ENCODE measurements at regions of chr21 and their contacts with region 1.

Region 1: GRCh38 chr21:40120940-40121575 is 253.8 kb downstream of the PCP4 start:
- DNase-seq: no peak
- ATAC-seq: no peak
- H3K4me3 Mint-ChIP-seq: no peak overlapping the region
- H3K27ac Mint-ChIP-seq: no peak overlapping the region
- H3K4me1 Mint-ChIP-seq: no peaks in the 10 kb centered on the region
- H3K27me3 Mint-ChIP-seq: no peaks in the 10 kb centered on the region; the same call in 1 of the 2 replicates
- CTCF ChIP-seq: peak; percentile 79

Region 2: GRCh38 chr21:39788383-39788782 is 332.7 kb before region 1 on chr21:
- CTCF ChIA-PET with region 1: interaction called, 10 read pairs
- POLR2A ChIA-PET with region 1: no interaction called
- DNase-seq: peak; percentile 79
- ATAC-seq: peak; percentile 100
- H3K4me3 Mint-ChIP-seq: no peak overlapping the region
- H3K27ac Mint-ChIP-seq: 0 out of 2 replicates have a peak overlapping the region, but pooled peaks have one; percentile 7
- H3K4me1 Mint-ChIP-seq: no peaks in the 10 kb centered on the region
- H3K27me3 Mint-ChIP-seq: peaks cover 6% of the 10 kb centered on the region; the same call in 1 of the 2 replicates
- CTCF ChIP-seq: 0 out of 2 replicates have a peak, but pooled peaks have one; percentile 18

Region 3: GRCh38 chr21:39867198-39867650 is 253.8 kb before region 1 on chr21 and contains the start of gene PCP4:
- CTCF ChIA-PET with region 1: interaction called, 63 read pairs
- POLR2A ChIA-PET with region 1: no interaction called
- DNase-seq: peak; percentile 87
- ATAC-seq: peak; percentile 100
- H3K4me3 Mint-ChIP-seq: peak within 1 kb of the TSS; percentile 3; the same call in 1 of the 2 replicates
- H3K27ac Mint-ChIP-seq: no peak within 1 kb of the TSS
- H3K4me1 Mint-ChIP-seq: peaks cover 10% of the 10 kb centered on the region
- H3K27me3 Mint-ChIP-seq: no peaks in the 10 kb centered on the region
- CTCF ChIP-seq: peak; percentile 94
- total RNA-seq, gene PCP4: 1.4 to 2.1 TPM (median 1.6 TPM) in 3 replicates

Region 4: DNA sequence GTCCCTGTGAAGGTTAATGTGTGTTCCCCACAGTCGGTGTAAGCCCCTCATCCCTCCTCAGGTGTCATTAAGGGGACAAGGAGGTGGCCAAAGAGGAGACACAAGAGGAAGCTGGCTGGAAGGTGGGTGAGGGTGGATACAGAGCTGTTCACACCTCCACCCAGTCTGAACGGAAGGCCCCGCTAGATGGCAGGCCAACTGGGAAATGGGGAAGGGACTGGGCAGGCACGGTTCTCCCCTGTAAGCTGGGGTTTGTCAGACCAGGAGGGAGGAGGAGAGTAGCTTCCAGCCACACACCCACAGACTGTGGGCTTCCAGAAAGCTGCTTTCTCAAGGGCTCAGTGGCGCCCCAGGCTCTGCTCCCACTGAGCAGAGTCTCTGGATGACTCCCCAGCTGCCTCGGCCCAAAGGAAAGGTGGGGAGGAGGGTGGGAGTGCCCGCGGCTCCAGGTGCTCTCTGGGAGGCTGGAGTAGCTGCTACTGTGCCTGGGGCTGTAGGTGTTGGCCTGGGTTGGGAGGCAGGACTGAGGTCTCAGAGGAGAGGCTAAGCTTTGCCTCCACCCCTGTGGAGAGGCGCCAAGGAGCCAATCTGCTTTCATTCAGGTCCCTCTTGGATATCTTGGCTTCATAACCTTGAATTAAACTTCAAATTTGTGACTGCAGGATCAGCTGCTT is 212.7 kb before region 1 on chr21:
- CTCF ChIA-PET with region 1: interaction called, 14 read pairs
- POLR2A ChIA-PET with region 1: no interaction called
- DNase-seq: peak; percentile 36
- ATAC-seq: peak; percentile 85
- H3K4me3 Mint-ChIP-seq: no peak overlapping the region
- H3K27ac Mint-ChIP-seq: no peak overlapping the region
- H3K4me1 Mint-ChIP-seq: peaks cover 7% of the 10 kb centered on the region
- H3K27me3 Mint-ChIP-seq: no peaks in the 10 kb centered on the region
- CTCF ChIP-seq: no peak

Region 5: DNA sequence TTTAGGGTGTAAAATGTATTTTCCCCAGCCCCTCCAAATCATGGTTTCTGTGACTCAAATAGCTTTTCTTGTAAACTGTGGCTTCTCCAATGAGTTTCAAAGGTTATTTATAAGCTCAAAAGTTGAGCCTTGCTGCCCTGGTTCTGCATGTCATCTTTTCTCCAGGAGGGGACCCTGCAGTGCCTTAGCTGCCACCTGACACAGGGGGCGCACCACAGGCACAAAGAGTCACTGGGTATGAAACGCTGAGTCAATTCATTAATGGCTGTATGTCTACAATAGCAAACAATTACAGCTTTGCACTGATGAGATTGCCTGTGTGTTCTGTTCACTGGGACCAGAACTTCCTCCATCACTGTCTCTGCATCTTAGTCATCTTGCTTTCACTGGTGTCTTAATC is 153.0 kb before region 1 on chr21:
- CTCF ChIA-PET with region 1: interaction called, 12 read pairs
- POLR2A ChIA-PET with region 1: no interaction called
- DNase-seq: peak; percentile 36
- ATAC-seq: peak; percentile 61
- H3K4me3 Mint-ChIP-seq: no peak overlapping the region
- H3K27ac Mint-ChIP-seq: no peak overlapping the region
- H3K4me1 Mint-ChIP-seq: no peaks in the 10 kb centered on the region
- H3K27me3 Mint-ChIP-seq: peaks cover 3% of the 10 kb centered on the region; the same call in 1 of the 2 replicates
- CTCF ChIP-seq: no peak

Region 6: DNA sequence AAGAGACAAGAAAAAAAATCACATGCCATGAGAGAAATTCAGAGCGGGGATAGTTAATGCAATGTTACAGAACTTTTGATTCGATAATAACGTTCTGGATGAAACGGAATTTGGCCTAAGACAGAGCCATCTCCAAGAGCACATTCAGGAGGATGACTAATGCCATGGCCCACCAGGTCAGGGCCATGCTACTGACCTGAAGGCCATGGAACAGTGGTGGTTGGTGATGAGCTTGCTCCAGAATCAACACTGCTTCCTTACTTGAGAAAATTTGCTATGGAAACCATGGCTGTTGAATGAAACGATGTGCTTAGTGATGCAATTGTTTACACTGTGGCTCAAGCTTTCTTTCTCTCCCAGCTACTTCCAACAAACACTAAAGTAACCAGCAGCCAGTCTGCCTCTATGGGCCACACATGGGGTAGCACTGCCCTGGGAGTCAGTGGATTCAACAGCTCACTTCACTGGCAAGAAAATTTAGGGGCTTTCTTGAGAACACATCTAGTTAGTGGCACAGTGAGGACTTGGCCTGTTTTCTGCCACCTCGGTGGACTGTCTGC is 45.3 kb after region 1 on chr21:
- CTCF ChIA-PET with region 1: no interaction called
- POLR2A ChIA-PET with region 1: no interaction called
- DNase-seq: no peak
- ATAC-seq: peak; percentile 85
- H3K4me3 Mint-ChIP-seq: no peak overlapping the region
- H3K27ac Mint-ChIP-seq: no peak overlapping the region
- H3K4me1 Mint-ChIP-seq: no peaks in the 10 kb centered on the region; the same call in 1 of the 2 replicates
- H3K27me3 Mint-ChIP-seq: peaks cover 2% of the 10 kb centered on the region; the same call in 1 of the 2 replicates
- CTCF ChIP-seq: no peak

Measured in WTC11 (cell line).